HepG2 (cell line): ENCODE measurements at regions of chr12 and their contacts with region 1.

Region 1: GRCh38 chr12:43501703-43502102 is 50.3 kb downstream of the ADAMTS20 start:
- DNase-seq: peak; percentile 3
- ATAC-seq: no peak
- H3K4me3 ChIP-seq: no peak overlapping the region
- H3K27ac ChIP-seq: no peak overlapping the region
- H3K4me1 ChIP-seq: no peaks in the 10 kb centered on the region
- H3K27me3 ChIP-seq: no peaks in the 10 kb centered on the region
- CTCF ChIP-seq: peak; percentile 41
- EP300 ChIP-seq: no peak
- POLR2A ChIP-seq: no peak
- RAD21 ChIP-seq: no peak

Region 2: DNA sequence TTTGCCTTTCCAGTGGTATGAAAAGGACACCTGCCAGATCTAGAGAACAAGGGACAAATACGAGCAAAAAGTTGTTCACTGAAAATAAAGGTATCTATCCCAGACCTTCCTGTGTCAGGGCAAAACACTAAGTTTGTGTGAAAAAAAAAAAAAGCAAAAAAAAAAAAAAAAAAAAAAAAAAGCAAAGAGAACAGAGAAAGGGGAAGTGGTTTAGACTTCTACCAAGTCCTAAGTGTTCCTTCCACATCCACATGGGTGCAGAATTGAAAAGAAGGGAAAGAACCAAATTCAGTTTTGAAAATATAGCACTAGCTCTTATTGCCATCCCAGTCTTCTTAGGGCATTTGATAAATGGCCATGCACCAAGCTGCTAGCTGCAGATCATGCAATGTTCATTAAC is 1217.5 kb before region 1 on chr12:
- CTCF ChIA-PET with region 1: no interaction called
- POLR2A ChIA-PET with region 1: no interaction called
- in situ Hi-C with region 1: no loop called
- intact Hi-C with region 1: no loop called
- DNase-seq: no peak
- ATAC-seq: no peak
- H3K4me3 ChIP-seq: no peak overlapping the region
- H3K27ac ChIP-seq: no peak overlapping the region
- H3K4me1 ChIP-seq: peaks cover 16% of the 10 kb centered on the region
- H3K27me3 ChIP-seq: peaks cover 0 to 3% of the 10 kb centered on the region in 2 experiments; a peak in 1 of 5 replicates
- CTCF ChIP-seq: no peak
- EP300 ChIP-seq: no peak
- POLR2A ChIP-seq: no peak
- RAD21 ChIP-seq: no peak

Region 3: GRCh38 chr12:43676183-43676813 is 174.6 kb after region 1 on chr12:
- CTCF ChIA-PET with region 1: no interaction called
- POLR2A ChIA-PET with region 1: no interaction called
- in situ Hi-C with region 1: loop called (anchors 10 kb)
- intact Hi-C with region 1: loop called (anchors 1 kb)
- DNase-seq: peak; percentile 45
- ATAC-seq: peak; percentile 94
- H3K4me3 ChIP-seq: no peak overlapping the region
- H3K27ac ChIP-seq: no peak overlapping the region
- H3K4me1 ChIP-seq: no peaks in the 10 kb centered on the region
- H3K27me3 ChIP-seq: no peaks in the 10 kb centered on the region
- CTCF ChIP-seq: peak; percentile 67
- EP300 ChIP-seq: no peak
- POLR2A ChIP-seq: no peak
- RAD21 ChIP-seq: no peak

Region 4: DNA sequence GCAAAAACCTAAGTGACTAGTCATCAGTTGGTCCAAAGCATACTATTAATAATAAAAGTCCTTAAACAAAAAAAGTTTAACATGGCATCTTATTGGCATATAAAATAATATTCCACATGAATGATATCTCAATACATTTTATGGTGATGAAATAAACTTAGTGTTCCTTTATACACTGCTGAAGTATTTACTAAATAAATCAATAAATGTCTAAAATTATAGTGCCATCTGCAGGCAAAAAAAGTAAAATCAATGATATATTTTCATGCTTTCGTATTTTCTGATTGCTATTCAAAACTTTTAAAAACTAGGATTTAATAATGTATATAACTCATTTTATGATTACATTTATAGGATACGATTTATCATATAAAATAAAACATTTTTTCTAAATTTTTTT is 226.4 kb after region 1 on chr12:
- CTCF ChIA-PET with region 1: no interaction called
- POLR2A ChIA-PET with region 1: no interaction called
- in situ Hi-C with region 1: loop called (anchors 10 kb)
- intact Hi-C with region 1: loop called (anchors 2 kb)
- DNase-seq: no peak
- ATAC-seq: no peak
- H3K4me3 ChIP-seq: no peak overlapping the region
- H3K27ac ChIP-seq: no peak overlapping the region
- H3K4me1 ChIP-seq: no peaks in the 10 kb centered on the region
- H3K27me3 ChIP-seq: no peaks in the 10 kb centered on the region
- CTCF ChIP-seq: no peak
- EP300 ChIP-seq: no peak
- POLR2A ChIP-seq: no peak
- RAD21 ChIP-seq: no peak

Region 5: GRCh38 chr12:43766291-43766690 is 264.6 kb after region 1 on chr12:
- CTCF ChIA-PET with region 1: no interaction called
- POLR2A ChIA-PET with region 1: no interaction called
- in situ Hi-C with region 1: no loop called
- intact Hi-C with region 1: no loop called
- DNase-seq: no peak
- ATAC-seq: no peak
- H3K4me3 ChIP-seq: no peak overlapping the region
- H3K27ac ChIP-seq: no peak overlapping the region
- H3K4me1 ChIP-seq: peaks cover 4% of the 10 kb centered on the region; the same call in 1 of the 2 replicates
- H3K27me3 ChIP-seq: no peaks in the 10 kb centered on the region
- CTCF ChIP-seq: no peak
- EP300 ChIP-seq: no peak
- POLR2A ChIP-seq: no peak
- RAD21 ChIP-seq: no peak